Motor neuron (in vitro differentiated cells): ENCODE measurements at regions of chr15 and their contacts with region 1.

Region 1: GRCh38 chr15:94670438-94671034 is 439.2 kb downstream of the MCTP2 start:
- ATAC-seq: peak in 6 of 8 experiments; percentile 36 to 66 (median 44)
- H3K4me3 ChIP-seq: no peak overlapping the region
- H3K27ac ChIP-seq: no peak overlapping the region
- H3K4me1 ChIP-seq: peaks cover 12 to 38% of the 10 kb centered on the region in 2 donors

Region 2: DNA sequence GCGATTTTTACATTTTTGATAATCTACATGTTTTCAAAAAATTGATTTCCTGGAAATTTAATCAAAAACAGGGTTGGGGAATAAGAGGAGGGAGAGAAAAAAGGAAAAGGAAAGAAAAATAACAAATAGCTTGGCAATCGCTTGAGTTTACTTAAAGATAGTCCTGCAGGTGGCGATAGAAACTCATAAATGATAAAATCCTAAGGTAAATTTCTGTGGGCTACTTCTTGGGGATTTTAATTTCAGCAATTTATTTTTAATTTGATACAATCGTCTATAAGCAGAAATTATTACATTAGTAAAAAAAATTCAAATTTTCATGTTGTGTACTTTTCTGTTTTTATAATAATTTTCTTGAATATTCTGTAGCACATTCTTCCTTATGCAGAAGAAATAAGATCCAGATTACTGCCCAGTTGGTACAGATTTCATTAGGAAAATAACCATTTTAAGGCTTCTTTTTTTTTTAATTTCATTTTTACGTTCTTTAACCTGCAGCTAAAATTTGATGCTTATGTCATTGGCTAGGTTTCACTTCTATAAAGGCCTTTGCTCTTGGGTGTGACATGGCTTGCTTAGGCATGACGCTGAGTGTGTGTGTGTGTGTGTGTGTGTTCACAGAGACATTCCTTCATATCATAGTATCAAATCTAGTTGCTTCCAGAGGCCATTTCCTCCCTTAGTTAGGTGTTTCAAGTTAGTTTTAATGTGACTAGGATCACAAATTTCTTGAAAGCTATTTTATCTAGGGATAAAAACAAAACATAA is 257.4 kb before region 1 on chr15:
- in situ Hi-C with region 1: loop called in 1 of 9 experiments (anchors 25 kb)
- ATAC-seq: peak in 2 of 8 experiments; percentile 39 to 44
- H3K4me3 ChIP-seq: no peak overlapping the region
- H3K27ac ChIP-seq: no peak overlapping the region
- H3K4me1 ChIP-seq: peaks cover 8 to 40% of the 10 kb centered on the region in 2 donors

Region 3: GRCh38 chr15:95018888-95019545 is 348.5 kb after region 1 on chr15:
- in situ Hi-C with region 1: loop called in 1 of 9 experiments (anchors 10 kb)
- ATAC-seq: peak in 4 of 8 experiments; percentile 55 to 84 (median 66)
- H3K4me3 ChIP-seq: no peak overlapping the region
- H3K27ac ChIP-seq: no peak overlapping the region
- H3K4me1 ChIP-seq: peaks cover 8 to 14% of the 10 kb centered on the region in 2 donors

Region 4: GRCh38 chr15:95259513-95259912 is 589.0 kb after region 1 on chr15:
- in situ Hi-C with region 1: loop called in 1 of 9 experiments (anchors 25 kb)
- ATAC-seq: peak; percentile 79 to 92 (median 86)
- H3K4me3 ChIP-seq: no peak overlapping the region
- H3K27ac ChIP-seq: no peak overlapping the region
- H3K4me1 ChIP-seq: peaks cover 6 to 10% of the 10 kb centered on the region in 2 donors

Region 5: DNA sequence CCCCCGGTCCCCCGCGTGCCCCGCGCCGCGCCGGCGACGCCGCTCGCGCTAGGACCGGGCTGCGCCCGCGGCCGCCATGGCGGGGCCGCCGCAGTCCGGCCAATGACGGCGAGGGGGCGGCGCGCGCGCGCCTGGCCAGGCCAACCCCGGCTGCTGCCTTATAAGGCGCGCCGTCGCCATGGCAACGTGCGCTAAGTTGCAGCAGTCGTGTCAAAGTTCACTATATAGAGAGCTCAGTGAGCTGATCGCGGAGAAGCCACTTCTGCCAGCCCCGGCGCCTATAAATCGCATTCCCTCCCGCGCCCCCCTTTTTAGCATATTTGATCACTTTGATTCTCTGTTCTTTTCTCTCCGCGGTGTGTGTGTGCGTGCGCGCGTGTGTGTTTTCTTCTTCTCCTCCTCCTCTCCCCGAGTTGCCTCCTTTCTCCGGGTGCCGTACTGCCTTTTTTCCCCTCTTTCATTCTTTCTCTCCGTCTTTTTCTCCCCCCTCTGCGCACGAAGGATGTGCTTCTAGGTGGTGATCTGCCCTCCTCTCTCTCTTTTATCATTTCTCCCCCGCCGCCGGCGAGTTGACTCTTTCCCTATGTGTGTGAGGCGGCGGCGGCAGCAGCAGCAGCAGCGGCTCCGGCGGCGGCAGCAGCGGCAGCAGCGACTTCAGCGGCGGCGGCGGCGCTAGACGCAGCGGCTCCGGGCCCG is 1660.1 kb after region 1 on chr15 and contains the start of gene NR2F2:
- in situ Hi-C with region 1: loop called in 2 of 9 experiments (anchors 25 kb)
- ATAC-seq: peak; percentile 60 to 87 (median 80)
- H3K4me3 ChIP-seq: peak within 1 kb of the TSS; percentile 46 to 92 (median 66)
- H3K27ac ChIP-seq: peak within 1 kb of the TSS; percentile 83 to 91
- H3K4me1 ChIP-seq: peaks cover 19 to 24% of the 10 kb centered on the region in 2 donors
- total RNA-seq, gene NR2F2: 7.5 to 28.9 (median 17.4) TPM